ENCODE measurements at regions of chr22 and their contacts with region 1.

Region 1: GRCh38 chr22:21990445-21991303 is 8.1 kb upstream of the TOP3B start:
- DNase-seq: peak in 3 of 4 experiments; percentile 55 to 60 (median 56)
- ATAC-seq: peak; percentile 8
- H3K4me3 ChIP-seq: no peak overlapping the region
- H3K27ac ChIP-seq: no peak overlapping the region
- H3K4me1 ChIP-seq: peaks cover 23 to 31% of the 10 kb centered on the region in 2 experiments; a peak in 4 of 5 replicates
- H3K27me3 ChIP-seq: peaks cover 0 to 16% of the 10 kb centered on the region in 2 experiments; a peak in 3 of 5 replicates
- CTCF ChIP-seq: peak in 1 of 3 experiments; percentile 27; a peak in 2 of 6 replicates
- EP300 ChIP-seq: no peak
- POLR2A ChIP-seq: no peak
- RAD21 ChIP-seq: no peak

Region 2: DNA sequence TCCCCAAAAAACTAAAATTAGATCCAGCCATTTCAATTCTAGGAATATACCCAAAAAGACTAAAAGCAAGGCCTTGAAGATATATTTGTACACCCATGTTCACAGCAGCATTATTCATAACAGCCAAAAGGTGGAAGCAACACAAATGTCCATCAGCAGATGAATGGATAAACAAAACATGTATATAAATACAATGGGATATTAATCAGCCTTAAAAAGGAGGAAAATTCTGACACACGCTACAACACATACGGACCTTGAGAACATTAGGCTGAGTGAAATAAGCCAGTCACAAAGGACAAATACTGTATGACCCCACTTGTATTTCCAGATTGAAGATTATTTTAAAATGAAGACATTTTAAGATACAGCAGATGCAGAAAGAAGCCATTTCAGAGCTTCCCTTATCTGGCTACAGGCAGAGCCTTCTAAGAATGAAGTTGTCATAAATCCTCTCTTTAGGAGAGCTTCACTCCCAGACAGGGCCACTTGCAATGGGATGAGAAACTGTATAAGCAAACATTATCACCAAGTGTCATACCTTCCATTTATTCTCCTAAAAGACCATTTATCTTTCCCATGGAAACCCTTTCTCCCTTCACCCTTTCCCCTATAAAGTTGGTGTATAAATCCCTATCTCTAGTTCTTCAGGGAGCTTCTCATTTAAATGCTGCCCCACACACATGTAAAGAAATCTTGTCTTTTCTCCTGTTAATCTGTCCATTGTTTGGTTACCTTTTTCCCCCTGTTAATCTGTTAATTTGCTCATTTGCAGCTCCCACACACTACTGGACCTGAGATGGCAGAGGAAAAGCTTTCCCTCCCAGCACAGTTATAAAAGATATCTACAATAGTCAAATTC is 11.2 kb after region 1 on chr22:
- CTCF ChIA-PET with region 1: no interaction called
- POLR2A ChIA-PET with region 1: interaction called, 176 read pairs
- in situ Hi-C with region 1: no loop called
- intact Hi-C with region 1: no loop called
- DNase-seq: peak in 2 of 4 experiments; percentile 82 to 89
- ATAC-seq: peak; percentile 84
- H3K4me3 ChIP-seq: no peak overlapping the region
- H3K27ac ChIP-seq: peak overlapping the region; percentile 12; the same call in 1 of the 3 replicates
- H3K4me1 ChIP-seq: peaks cover 11 to 29% of the 10 kb centered on the region in 2 experiments
- H3K27me3 ChIP-seq: peaks cover 0 to 6% of the 10 kb centered on the region in 2 experiments; a peak in 3 of 5 replicates
- CTCF ChIP-seq: no peak
- EP300 ChIP-seq: no peak
- POLR2A ChIP-seq: no peak
- RAD21 ChIP-seq: no peak

Measured in K562 (cell line).